ENCODE measurements at regions of chr6 and their contacts with region 1.

Region 1: DNA sequence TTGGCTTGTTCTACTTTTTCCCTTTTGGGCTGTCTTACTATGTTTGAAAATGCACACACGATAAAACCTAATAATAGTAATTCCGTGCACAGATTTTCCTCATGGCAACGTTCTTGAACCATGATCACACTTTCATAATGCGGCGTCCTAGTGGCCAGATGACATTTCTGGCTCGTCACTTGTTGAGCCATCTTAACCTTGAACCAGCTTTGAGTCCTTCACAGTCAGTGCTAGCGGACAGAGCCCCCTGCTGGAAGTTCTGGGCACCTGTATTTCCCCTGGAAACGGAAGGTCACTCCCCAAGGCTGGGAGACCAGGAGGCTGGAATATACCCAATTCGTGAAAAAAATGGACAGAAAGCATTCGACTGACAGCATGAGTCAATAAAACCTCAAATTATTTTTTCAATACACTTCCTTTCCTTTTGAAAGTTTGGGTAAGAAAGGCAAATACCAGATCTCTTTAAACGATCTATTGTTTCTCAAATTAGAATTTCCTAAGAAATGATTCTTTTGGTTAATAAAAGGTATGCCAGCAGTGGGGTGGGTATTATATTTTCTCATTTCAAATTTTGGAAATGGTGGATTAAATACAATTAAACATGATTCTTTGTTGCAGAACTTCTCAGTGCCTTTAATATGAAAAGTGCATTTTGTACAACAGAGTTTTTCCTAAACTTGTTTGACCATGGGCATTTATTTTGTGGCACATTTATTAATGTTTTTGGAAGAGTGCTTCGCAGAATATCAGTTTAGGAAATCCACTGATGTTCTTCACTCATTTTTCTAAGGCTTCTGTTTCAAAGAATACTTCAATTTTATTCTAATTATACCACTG is 542.3 kb downstream of the QKI start:
- DNase-seq: peak; percentile 84
- H3K4me3 ChIP-seq: no peak overlapping the region
- H3K27ac ChIP-seq: no peak overlapping the region
- H3K4me1 ChIP-seq: no peaks in the 10 kb centered on the region
- CTCF ChIP-seq: peak; percentile 99

Region 2: GRCh38 chr6:163170294-163170883 is 786.4 kb before region 1 on chr6:
- CTCF ChIA-PET with region 1: no interaction called
- POLR2A ChIA-PET with region 1: no interaction called
- intact Hi-C with region 1: loop called (anchors 1 kb)
- DNase-seq: peak; percentile 49
- H3K4me3 ChIP-seq: no peak overlapping the region
- H3K27ac ChIP-seq: no peak overlapping the region
- H3K4me1 ChIP-seq: no peaks in the 10 kb centered on the region
- CTCF ChIP-seq: peak; percentile 86

Region 3: GRCh38 chr6:163655217-163656121 is 301.3 kb before region 1 on chr6:
- CTCF ChIA-PET with region 1: no interaction called
- POLR2A ChIA-PET with region 1: no interaction called
- intact Hi-C with region 1: loop called (anchors 1 kb)
- DNase-seq: peak; percentile 24
- H3K4me3 ChIP-seq: no peak overlapping the region
- H3K27ac ChIP-seq: no peak overlapping the region
- H3K4me1 ChIP-seq: no peaks in the 10 kb centered on the region
- CTCF ChIP-seq: peak; percentile 47; the same call in 1 of the 2 replicates

Region 4: GRCh38 chr6:164048840-164049516 is 92.2 kb after region 1 on chr6:
- CTCF ChIA-PET with region 1: no interaction called
- POLR2A ChIA-PET with region 1: no interaction called
- intact Hi-C with region 1: no loop called
- DNase-seq: no peak
- H3K4me3 ChIP-seq: no peak overlapping the region
- H3K27ac ChIP-seq: no peak overlapping the region
- H3K4me1 ChIP-seq: no peaks in the 10 kb centered on the region
- CTCF ChIP-seq: no peak

Region 5: DNA sequence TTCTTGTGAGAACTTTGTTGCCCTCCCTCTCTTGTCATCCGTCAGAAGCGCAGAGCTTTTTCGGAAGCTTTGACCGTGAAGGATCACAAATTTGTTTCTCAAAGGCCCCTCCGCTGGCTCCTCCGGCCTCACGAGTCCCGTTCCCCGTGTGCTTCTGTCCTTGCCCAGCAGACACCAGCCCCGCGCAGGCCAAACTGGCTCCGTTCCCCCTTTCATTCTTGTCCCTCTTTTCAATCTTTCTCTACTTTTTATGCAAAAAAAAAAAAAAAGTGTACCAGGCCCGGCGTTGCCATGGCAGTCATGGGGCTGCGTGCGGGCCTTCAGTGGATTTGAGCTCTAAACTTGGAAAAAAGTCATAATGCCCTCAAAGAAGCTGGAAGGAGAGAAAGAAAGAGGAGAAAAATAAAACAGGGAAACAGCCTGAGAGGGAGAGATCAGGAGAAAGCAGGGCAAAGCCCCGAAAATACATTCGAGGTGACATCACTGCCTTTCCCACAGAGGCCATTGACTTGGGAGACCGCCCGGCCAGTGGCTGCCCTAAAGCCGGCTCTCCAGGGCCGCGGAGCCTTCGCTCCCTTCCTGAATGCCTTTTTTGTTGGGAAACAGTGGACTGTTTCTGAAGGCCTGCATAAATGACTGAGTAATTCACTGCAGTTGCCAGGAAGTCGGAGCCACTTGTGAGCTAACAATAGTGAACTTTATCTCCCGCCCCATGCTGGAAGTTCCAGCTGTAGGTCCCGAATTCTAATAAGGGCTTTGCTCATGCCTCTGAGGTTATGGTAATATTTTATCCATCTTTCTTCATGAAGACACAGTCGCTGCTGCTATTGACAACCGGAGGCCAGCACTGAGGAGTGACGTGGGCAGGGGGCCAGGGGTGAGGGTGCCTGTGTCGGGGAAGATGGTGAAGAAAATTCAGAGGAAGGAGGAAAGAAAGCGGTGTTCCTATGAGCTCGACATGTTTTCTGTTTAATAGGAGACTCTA is 128.6 kb after region 1 on chr6:
- CTCF ChIA-PET with region 1: no interaction called
- POLR2A ChIA-PET with region 1: no interaction called
- intact Hi-C with region 1: no loop called
- DNase-seq: no peak
- H3K4me3 ChIP-seq: no peak overlapping the region
- H3K27ac ChIP-seq: no peak overlapping the region
- H3K4me1 ChIP-seq: no peaks in the 10 kb centered on the region
- CTCF ChIP-seq: no peak